K562 (cell line): ENCODE measurements at regions of chr11 and their contacts with region 1.

Region 1: GRCh38 chr11:111878849-111879636 is at the starts of genes CFAP68 and FDXACB1:
- DNase-seq: peak; percentile 92 to 98 (median 93)
- ATAC-seq: peak; percentile 91
- H3K4me3 ChIP-seq: peak within 1 kb of the TSS; percentile 62
- H3K27ac ChIP-seq: peak within 1 kb of the TSS; percentile 95
- H3K4me1 ChIP-seq: peaks cover 10 to 21% of the 10 kb centered on the region in 2 experiments; a peak in 4 of 5 replicates
- H3K27me3 ChIP-seq: no peaks in the 10 kb centered on the region
- CTCF ChIP-seq: peak; percentile 95 to 98 (median 98)
- EP300 ChIP-seq: no peak; the same call in 1 of the 2 replicates
- POLR2A ChIP-seq: peak; percentile 88
- RAD21 ChIP-seq: peak; percentile 85 to 89
- polyA plus RNA-seq, gene CFAP68: 71.6 to 71.7 TPM
- polyA plus RNA-seq, gene FDXACB1: 7.4 to 7.5 TPM

Region 2: DNA sequence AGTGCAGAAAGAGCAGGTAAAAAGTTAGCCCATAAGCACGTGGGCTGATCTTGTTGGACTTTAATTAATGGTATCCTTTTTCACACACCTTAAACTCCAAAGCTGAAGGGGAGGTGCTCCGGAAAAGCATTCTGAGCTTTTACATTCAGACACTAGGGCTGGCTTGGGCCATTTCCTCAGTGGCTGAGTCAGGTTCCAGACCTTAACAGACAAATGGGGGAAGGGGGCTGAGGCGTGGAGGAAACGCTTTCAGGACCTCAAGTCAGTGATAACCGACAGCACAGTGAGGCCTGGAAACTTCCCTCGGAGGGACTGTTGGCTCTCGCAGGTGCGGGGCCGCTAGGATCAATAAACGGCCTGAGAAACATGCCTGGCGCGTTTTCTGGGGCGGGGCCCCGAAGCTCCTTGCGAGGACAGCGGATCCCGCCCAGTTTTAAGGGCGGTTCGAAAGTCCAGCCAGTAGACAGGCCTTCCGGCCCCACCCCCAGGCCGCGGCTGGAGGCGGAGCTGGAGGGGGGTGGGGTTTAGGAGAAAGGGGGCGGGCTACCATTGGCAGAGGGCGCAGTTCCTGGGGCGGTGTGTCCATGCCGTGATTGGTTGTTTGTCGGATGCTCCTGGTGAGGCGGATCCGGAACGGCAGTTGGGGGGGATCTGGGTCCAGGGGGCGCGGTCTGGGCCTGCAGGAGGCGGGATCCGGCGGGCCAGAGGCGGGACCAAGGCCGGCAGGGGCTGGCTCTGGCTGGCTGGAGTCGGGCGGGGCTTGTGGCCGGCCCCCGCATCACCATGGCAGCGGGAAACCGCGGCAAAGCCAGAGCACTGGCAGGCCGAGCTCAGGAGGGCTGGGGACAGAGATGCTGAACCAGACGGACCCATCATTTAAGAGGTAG is 47.7 kb after region 1 on chr11:
- CTCF ChIA-PET with region 1: no interaction called
- POLR2A ChIA-PET with region 1: interaction called, 4 read pairs
- in situ Hi-C with region 1: loop called (anchors 5 kb)
- intact Hi-C with region 1: loop called (anchors 1 kb)
- DNase-seq: peak; percentile 97 to 99 (median 98)
- ATAC-seq: peak; percentile 96
- H3K4me3 ChIP-seq: peak overlapping the region; percentile 40
- H3K27ac ChIP-seq: peak overlapping the region; percentile 89
- H3K4me1 ChIP-seq: peaks cover 31 to 33% of the 10 kb centered on the region in 2 experiments
- H3K27me3 ChIP-seq: no peaks in the 10 kb centered on the region
- CTCF ChIP-seq: no peak
- EP300 ChIP-seq: no peak; the same call in 1 of the 2 replicates
- POLR2A ChIP-seq: peak; percentile 89
- RAD21 ChIP-seq: peak in 1 of 2 experiments; percentile 16; a peak in 1 of 4 replicates

Region 3: DNA sequence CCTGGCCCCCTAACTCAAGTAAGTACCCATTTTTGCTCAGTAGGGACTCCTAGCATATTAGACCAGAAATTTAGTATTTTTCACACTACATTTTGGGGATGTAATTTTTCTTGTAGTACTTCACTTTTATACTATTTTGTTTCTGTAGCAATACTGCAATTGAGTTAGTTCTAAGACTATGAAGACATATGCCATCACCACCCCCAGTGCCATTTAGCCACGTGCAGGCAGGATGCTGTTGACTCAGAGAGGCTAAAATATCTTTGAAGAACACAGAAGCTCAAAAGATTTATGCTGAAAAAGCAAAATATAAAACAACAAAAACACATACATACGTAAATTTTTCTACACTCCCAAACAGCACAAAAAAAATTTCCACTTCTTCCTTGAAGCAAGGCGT is 117.1 kb after region 1 on chr11:
- CTCF ChIA-PET with region 1: interaction called, 5 read pairs
- POLR2A ChIA-PET with region 1: no interaction called
- in situ Hi-C with region 1: no loop called
- intact Hi-C with region 1: loop called (anchors 1 kb)
- DNase-seq: no peak
- ATAC-seq: no peak
- H3K4me3 ChIP-seq: no peak overlapping the region
- H3K27ac ChIP-seq: no peak overlapping the region
- H3K4me1 ChIP-seq: no peaks in the 10 kb centered on the region
- H3K27me3 ChIP-seq: no peaks in the 10 kb centered on the region
- CTCF ChIP-seq: no peak
- EP300 ChIP-seq: no peak
- POLR2A ChIP-seq: no peak
- RAD21 ChIP-seq: no peak

Region 4: GRCh38 chr11:112086422-112087191 is 207.6 kb after region 1 on chr11 and contains the starts of genes SDHD and TIMM8B:
- CTCF ChIA-PET with region 1: no interaction called
- POLR2A ChIA-PET with region 1: no interaction called
- in situ Hi-C with region 1: no loop called
- intact Hi-C with region 1: loop called (anchors 5 kb)
- DNase-seq: peak; percentile 93 to 98 (median 94)
- ATAC-seq: peak; percentile 94
- H3K4me3 ChIP-seq: peak within 1 kb of the TSS; percentile 84
- H3K27ac ChIP-seq: peak within 1 kb of the TSS; percentile 84
- H3K4me1 ChIP-seq: peaks cover 0 to 19% of the 10 kb centered on the region in 2 experiments; a peak in 3 of 5 replicates
- H3K27me3 ChIP-seq: no peaks in the 10 kb centered on the region
- CTCF ChIP-seq: peak; percentile 34 to 49 (median 38); a peak in 4 of 6 replicates
- EP300 ChIP-seq: peak; percentile 6; the same call in 1 of the 2 replicates
- POLR2A ChIP-seq: peak; percentile 95
- RAD21 ChIP-seq: no peak
- polyA plus RNA-seq, gene SDHD: 1,105 to 1,225 TPM
- polyA plus RNA-seq, gene TIMM8B: 325 to 338 TPM

Region 5: GRCh38 chr11:112280268-112281126 is 401.5 kb after region 1 on chr11:
- CTCF ChIA-PET with region 1: no interaction called
- POLR2A ChIA-PET with region 1: no interaction called
- in situ Hi-C with region 1: no loop called
- intact Hi-C with region 1: loop called (anchors 5 kb)
- DNase-seq: peak; percentile 76 to 87 (median 78)
- ATAC-seq: peak; percentile 94
- H3K4me3 ChIP-seq: peak overlapping the region; percentile 23; the same call in 1 of the 2 replicates
- H3K27ac ChIP-seq: no peak overlapping the region
- H3K4me1 ChIP-seq: peaks cover 18 to 19% of the 10 kb centered on the region in 2 experiments
- H3K27me3 ChIP-seq: peaks cover 0 to 7% of the 10 kb centered on the region in 2 experiments; a peak in 1 of 5 replicates
- CTCF ChIP-seq: peak; percentile 78 to 89 (median 84)
- EP300 ChIP-seq: no peak
- POLR2A ChIP-seq: no peak
- RAD21 ChIP-seq: peak; percentile 72 to 81